CD4-positive, alpha-beta T cell (primary cell): ENCODE measurements at regions of chr11 and their contacts with region 1.

Region 1: DNA sequence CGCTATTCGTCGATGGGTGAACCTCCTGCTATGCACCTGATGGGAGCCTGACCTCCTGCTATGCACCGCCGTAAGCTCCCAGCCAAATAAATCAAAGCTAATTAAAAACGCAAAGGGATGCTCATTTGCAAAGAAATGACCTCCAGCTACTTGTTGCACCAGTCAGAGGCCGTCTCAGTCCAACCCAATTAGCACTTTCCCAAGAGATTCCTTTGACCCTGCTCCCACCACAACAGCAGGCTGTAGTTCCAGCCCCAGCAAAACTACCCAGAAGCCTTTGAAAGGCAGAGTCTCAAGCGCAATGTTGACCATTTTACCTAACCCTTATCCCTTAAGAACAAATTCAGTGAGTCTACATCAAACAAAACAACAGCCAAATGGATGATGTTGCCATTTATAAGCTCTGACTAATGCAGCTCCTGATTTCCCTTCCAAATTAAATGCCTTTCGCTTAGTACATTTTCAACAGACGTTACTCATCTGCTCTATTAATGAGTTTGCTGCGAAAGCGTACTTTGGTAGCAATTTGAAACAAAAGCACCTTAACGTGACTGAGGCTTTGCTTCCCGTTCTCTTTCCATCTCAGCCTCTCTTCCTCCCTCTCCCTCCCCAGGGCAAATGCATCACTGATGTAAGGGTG is 17.2 kb upstream of the BSX start:
- DNase-seq: no peak
- ATAC-seq: no peak
- H3K4me3 ChIP-seq: no peak overlapping the region
- H3K4me3 Mint-ChIP-seq: no peak overlapping the region
- H3K27ac ChIP-seq: no peak overlapping the region
- H3K27ac Mint-ChIP-seq: no peak overlapping the region
- H3K4me1 ChIP-seq: no peaks in the 10 kb centered on the region
- H3K4me1 Mint-ChIP-seq: no peaks in the 10 kb centered on the region
- H3K27me3 ChIP-seq: peaks cover 5 to 6% of the 10 kb centered on the region in 2 experiments
- H3K27me3 Mint-ChIP-seq: peaks cover 56% of the 10 kb centered on the region
- CTCF ChIP-seq: no peak

Region 2: GRCh38 chr11:122897606-122898485 is 101.0 kb before region 1 on chr11:
- CTCF ChIA-PET with region 1: no interaction called
- POLR2A ChIA-PET with region 1: no interaction called
- intact Hi-C with region 1: no loop called
- DNase-seq: no peak
- ATAC-seq: no peak
- H3K4me3 ChIP-seq: no peak overlapping the region
- H3K4me3 Mint-ChIP-seq: no peak overlapping the region
- H3K27ac ChIP-seq: no peak overlapping the region
- H3K27ac Mint-ChIP-seq: no peak overlapping the region
- H3K4me1 ChIP-seq: no peaks in the 10 kb centered on the region
- H3K4me1 Mint-ChIP-seq: no peaks in the 10 kb centered on the region
- H3K27me3 ChIP-seq: no peaks in the 10 kb centered on the region
- H3K27me3 Mint-ChIP-seq: no peaks in the 10 kb centered on the region
- CTCF ChIP-seq: no peak

Region 3: GRCh38 chr11:123033895-123034294 is 35.0 kb after region 1 on chr11:
- CTCF ChIA-PET with region 1: no interaction called
- POLR2A ChIA-PET with region 1: no interaction called
- intact Hi-C with region 1: loop called in 1 of 2 experiments (anchors 1 kb)
- DNase-seq: peak in 1 of 14 experiments; percentile 23
- ATAC-seq: peak; percentile 39
- H3K4me3 ChIP-seq: no peak overlapping the region
- H3K4me3 Mint-ChIP-seq: no peak overlapping the region
- H3K27ac ChIP-seq: no peak overlapping the region
- H3K27ac Mint-ChIP-seq: no peak overlapping the region
- H3K4me1 ChIP-seq: no peaks in the 10 kb centered on the region
- H3K4me1 Mint-ChIP-seq: no peaks in the 10 kb centered on the region
- H3K27me3 ChIP-seq: no peaks in the 10 kb centered on the region
- H3K27me3 Mint-ChIP-seq: no peaks in the 10 kb centered on the region
- CTCF ChIP-seq: peak; percentile 23